ENCODE measurements at regions of chr1 and their contacts with region 1.

Region 1: DNA sequence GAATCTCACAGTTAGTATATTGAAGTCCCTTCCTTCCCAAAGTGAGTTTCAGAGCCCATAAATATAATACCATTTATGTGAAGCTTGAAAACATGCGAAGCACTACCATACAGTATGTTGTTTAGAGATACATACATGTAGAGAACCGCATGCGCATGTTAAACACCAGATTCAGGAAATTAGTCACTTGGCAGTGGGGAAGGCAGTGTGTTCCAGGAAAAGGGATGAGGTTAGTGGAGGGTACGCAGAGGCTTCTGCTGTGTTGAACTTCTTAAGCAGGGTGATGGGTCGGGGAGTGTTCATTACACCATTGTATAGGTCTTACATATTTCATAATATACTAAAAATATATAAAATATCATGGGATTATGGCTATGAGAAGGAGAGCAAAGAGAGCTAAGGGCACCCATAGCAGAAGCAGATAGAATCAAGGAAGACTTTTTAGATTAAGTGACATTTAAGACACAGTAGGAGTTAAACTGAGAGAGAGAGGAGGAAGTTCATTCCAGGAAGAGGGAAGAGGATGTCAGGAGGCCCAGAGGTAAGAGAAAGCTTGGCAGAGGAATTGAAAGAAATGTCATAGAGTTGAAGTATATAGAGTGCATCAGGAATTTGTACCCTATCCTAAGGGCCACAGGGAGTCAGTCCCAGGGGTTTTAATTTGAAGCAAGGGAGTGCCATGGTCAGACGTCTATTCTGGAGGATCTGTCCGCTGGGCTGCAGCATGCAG is 43.5 kb upstream of the SARS1 start:
- DNase-seq: no peak
- ATAC-seq: 0 out of 3 replicates have a peak, but pooled peaks have one; percentile 8
- H3K4me3 ChIP-seq: no peak overlapping the region
- H3K27ac ChIP-seq: no peak overlapping the region
- H3K4me1 ChIP-seq: peaks cover 6 to 29% of the 10 kb centered on the region in 2 experiments; a peak in 4 of 5 replicates
- H3K27me3 ChIP-seq: no peaks in the 10 kb centered on the region
- CTCF ChIP-seq: no peak
- EP300 ChIP-seq: no peak
- POLR2A ChIP-seq: no peak
- RAD21 ChIP-seq: no peak

Region 2: GRCh38 chr1:108316545-108316944 is 853.7 kb before region 1 on chr1:
- CTCF ChIA-PET with region 1: no interaction called
- POLR2A ChIA-PET with region 1: no interaction called
- in situ Hi-C with region 1: no loop called
- intact Hi-C with region 1: no loop called
- DNase-seq: no peak
- ATAC-seq: peak; percentile 28; the same call in 1 of the 3 replicates
- H3K4me3 ChIP-seq: no peak overlapping the region
- H3K27ac ChIP-seq: no peak overlapping the region
- H3K4me1 ChIP-seq: no peaks in the 10 kb centered on the region
- H3K27me3 ChIP-seq: no peaks in the 10 kb centered on the region
- CTCF ChIP-seq: peak in 1 of 3 experiments; percentile 16; a peak in 1 of 6 replicates
- EP300 ChIP-seq: no peak
- POLR2A ChIP-seq: 0 out of 2 replicates have a peak, but pooled peaks have one; percentile 6
- RAD21 ChIP-seq: 0 out of 4 replicates have a peak, but pooled peaks of 1 of the 2 experiments have one; percentile 15

Region 3: DNA sequence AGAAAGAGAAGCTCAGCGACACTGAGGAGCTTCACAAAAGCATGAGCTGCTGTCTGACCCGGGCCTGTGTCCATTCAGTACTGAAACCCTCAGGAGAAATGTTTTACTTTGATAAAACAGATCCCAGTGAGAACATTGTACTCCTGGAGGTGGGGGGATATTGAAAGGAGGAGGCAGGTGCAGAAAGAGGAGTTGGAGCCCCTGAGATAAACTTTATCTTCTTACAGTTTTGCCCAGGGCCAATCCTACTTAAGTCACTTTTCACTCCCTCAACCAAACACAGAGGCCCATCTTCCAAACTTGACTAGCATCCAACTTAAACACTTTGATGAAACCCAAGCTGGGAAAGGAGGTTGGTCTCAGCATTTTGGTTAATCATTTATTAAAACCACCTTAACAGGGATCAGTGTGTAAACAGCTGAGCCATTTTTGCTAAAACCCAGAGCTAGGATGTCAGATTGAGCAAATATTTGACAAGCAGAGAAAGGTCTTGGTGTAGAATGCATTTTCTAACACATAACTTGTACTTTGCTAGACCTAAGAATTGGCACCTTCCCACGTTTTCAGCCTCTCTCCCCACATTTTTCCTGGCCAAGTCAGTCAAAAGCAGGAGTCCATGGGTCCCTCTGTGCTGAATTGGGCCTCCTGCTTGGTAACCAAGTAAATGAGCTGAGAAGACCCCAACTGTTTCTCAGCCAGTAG is 11.1 kb after region 1 on chr1:
- CTCF ChIA-PET with region 1: no interaction called
- POLR2A ChIA-PET with region 1: interaction called, 12 read pairs
- in situ Hi-C with region 1: no loop called
- intact Hi-C with region 1: no loop called
- DNase-seq: peak; percentile 40 to 90 (median 64)
- ATAC-seq: peak; percentile 81
- H3K4me3 ChIP-seq: no peak overlapping the region
- H3K27ac ChIP-seq: peak overlapping the region; percentile 42
- H3K4me1 ChIP-seq: peaks cover 26 to 28% of the 10 kb centered on the region in 2 experiments
- H3K27me3 ChIP-seq: no peaks in the 10 kb centered on the region
- CTCF ChIP-seq: no peak
- EP300 ChIP-seq: peak; percentile 75; the same call in 1 of the 2 replicates
- POLR2A ChIP-seq: no peak
- RAD21 ChIP-seq: no peak

Measured in K562 (cell line).